Activated CD4-positive, alpha-beta T cell treated with anti-CD3 and anti-CD28 coated beads, Interleukin-2, amount 10 ng/mL, durations not matched to agents 24 days and 14 days (primary cell): ENCODE measurements at regions of chr13 and their contacts with region 1.

Region 1: DNA sequence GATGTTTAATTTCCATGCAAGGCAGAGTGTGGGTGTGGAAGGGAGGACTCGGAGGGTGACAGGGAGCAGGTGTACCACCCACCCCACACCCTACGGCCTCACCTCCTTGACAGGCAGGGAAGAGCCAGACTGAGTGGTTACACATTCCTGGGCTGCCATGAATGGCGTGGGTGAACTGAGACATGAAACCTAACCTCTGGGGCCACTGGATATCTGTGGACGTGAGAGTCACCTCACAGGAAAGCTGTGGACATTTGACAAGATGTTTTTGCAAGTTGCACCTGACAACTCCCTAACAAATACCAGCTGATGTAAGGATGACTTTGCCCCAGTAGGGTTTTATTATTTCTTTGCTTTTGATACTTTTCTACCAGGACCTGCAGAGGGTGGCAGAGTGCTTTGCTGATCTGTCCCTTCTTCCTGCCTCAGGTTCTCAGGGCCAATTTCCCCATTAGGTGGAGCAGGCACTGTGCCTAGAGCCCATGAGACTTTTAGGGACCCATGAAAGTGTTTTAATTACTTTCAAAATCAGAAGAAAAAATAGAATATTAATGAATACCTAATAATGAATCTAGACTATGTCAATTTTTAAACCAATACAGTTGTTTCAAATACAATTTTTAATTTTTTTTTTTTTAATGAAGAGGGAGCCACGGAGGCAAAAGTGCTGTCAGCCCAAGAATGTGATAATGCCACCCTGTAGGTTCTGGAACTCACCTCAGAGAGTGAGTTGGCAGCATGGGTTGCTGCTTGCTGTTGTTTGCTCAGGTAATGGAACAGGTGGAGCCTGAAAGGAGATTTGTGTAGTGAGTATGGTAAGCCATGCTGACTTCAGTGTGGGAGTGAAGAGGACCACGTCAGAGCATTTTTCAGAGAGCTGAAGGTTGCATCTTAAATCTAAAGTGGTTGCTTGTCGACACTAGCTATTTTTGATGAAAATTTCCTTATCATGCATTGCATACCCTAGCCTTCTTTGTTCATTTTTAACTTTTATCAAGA is 58.0 kb upstream of the CYSLTR2 start:
- DNase-seq: peak; percentile 84
- H3K4me3 Mint-ChIP-seq: no peak overlapping the region
- H3K27ac Mint-ChIP-seq: no peak overlapping the region
- H3K4me1 Mint-ChIP-seq: peaks cover under 1% of the 10 kb centered on the region
- H3K27me3 Mint-ChIP-seq: peaks cover 6% of the 10 kb centered on the region

Region 2: DNA sequence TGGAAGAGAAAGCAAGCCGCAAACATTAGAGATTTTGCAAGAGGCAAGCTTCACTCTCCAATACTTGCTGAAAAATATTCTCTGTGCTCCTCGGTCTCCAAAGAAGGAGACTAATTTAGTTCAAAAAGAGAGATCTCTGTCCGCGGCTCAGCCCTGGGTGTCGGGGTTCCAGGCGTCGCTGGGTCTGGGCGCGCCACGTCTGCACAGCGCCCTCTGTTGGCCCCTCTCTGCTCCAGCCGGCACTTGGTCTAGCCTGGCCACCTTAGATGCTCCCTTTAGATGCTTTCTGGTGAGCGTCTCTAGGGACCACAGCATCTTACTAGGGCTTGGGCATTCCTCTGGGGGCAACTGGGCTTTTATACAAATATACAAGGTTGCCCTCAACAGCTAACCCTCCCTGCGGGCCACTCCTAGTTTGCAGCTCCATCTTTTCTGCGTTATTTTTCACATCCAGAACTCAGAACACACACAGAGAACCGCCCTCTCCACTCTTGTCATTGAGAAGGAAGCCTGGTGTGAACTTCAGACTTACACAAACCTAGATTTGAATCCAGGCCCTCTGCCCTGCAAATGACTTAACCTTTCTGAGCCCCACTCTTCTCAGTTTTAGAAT is 136.3 kb after region 1 on chr13:
- intact Hi-C with region 1: loop called (anchors 1 kb)
- DNase-seq: peak; percentile 85
- H3K4me3 Mint-ChIP-seq: peak overlapping the region; percentile 75
- H3K27ac Mint-ChIP-seq: no peak overlapping the region
- H3K4me1 Mint-ChIP-seq: peaks cover 7% of the 10 kb centered on the region
- H3K27me3 Mint-ChIP-seq: peaks cover 5% of the 10 kb centered on the region

Region 3: DNA sequence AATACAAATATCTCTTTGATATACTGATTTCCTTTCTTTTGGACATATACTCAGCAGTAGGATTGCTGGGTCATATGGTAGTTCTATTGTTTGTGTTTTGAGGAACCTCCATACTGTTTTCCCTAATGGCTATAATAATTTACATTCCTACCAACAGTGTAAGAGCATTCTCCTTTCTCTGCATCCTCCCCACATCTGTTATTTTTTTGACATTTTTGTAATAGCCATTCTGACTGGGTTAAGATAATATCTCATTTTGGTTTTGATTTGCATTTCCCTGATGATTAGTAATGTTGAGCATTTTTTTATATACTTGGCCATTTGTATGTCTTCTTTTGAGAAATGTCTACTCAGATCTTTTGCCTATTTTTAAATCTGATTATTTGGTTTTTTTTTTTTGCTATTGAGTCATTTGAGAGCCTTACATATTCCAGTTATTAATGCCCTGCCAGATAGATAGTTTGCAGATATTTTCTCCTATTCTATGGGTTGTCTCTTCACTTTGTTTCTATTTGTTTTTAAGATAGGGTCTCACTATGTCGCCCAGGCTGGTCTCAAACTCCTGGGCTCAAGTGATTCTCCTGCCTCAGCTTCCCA is 475.7 kb after region 1 on chr13:
- intact Hi-C with region 1: no loop called
- DNase-seq: no peak
- H3K4me3 Mint-ChIP-seq: no peak overlapping the region
- H3K27ac Mint-ChIP-seq: no peak overlapping the region
- H3K4me1 Mint-ChIP-seq: no peaks in the 10 kb centered on the region
- H3K27me3 Mint-ChIP-seq: no peaks in the 10 kb centered on the region